CD8-positive, alpha-beta T cell (primary cell): ENCODE measurements at regions of chr7 and their contacts with region 1.

Region 1: GRCh38 chr7:75920431-75921161 is 5.6 kb downstream of the POR start:
- DNase-seq: peak in 3 of 9 experiments; percentile 11 to 38 (median 33)
- ATAC-seq: peak; percentile 44
- H3K4me3 ChIP-seq: no peak overlapping the region
- H3K4me3 Mint-ChIP-seq: no peak overlapping the region
- H3K27ac ChIP-seq: no peak overlapping the region
- H3K27ac Mint-ChIP-seq: no peak overlapping the region
- H3K4me1 ChIP-seq: peaks cover 16% of the 10 kb centered on the region
- H3K4me1 Mint-ChIP-seq: peaks cover 43% of the 10 kb centered on the region
- H3K27me3 ChIP-seq: no peaks in the 10 kb centered on the region
- H3K27me3 Mint-ChIP-seq: no peaks in the 10 kb centered on the region
- CTCF ChIP-seq: no peak

Region 2: DNA sequence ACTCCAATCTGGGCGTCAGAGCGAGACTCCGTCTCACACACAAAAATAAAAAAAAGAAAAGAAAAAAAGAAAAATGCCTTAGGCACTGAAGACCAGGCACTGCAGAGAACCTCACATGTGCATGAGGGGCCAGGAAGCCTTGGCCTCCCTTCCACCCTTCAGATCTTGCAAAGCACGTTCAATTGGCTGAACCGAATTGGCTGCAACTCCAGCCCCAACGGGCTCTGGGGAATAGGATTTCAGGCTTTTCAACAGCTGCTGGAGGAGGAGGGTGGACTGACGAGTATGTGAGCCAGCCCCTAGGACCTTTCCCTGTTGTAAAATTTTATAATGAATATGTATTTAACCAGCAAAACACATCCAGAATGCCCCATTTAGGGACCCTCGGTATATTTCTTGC is 57.1 kb after region 1 on chr7:
- CTCF ChIA-PET with region 1: no interaction called
- POLR2A ChIA-PET with region 1: no interaction called
- intact Hi-C with region 1: loop called in 1 of 2 experiments (anchors 5 kb)
- DNase-seq: no peak
- ATAC-seq: no peak
- H3K4me3 ChIP-seq: no peak overlapping the region
- H3K4me3 Mint-ChIP-seq: no peak overlapping the region
- H3K27ac ChIP-seq: no peak overlapping the region
- H3K27ac Mint-ChIP-seq: no peak overlapping the region
- H3K4me1 ChIP-seq: no peaks in the 10 kb centered on the region
- H3K4me1 Mint-ChIP-seq: no peaks in the 10 kb centered on the region
- H3K27me3 ChIP-seq: no peaks in the 10 kb centered on the region
- H3K27me3 Mint-ChIP-seq: no peaks in the 10 kb centered on the region
- CTCF ChIP-seq: no peak